Sigmoid colon (tissue), 7 donors: ENCODE measurements at regions of chr5 and their contacts with region 1.

Region 1: GRCh38 chr5:172697123-172698121 is 56.4 kb downstream of the NEURL1B start:
- DNase-seq: peak; percentile 95
- H3K4me3 ChIP-seq: peak overlapping the region; percentile 48 to 68 (median 64)
- H3K27ac ChIP-seq: peak overlapping the region; percentile 74 to 91 (median 85)
- H3K4me1 ChIP-seq: peaks cover 0 to 64% (median 61%) of the 10 kb centered on the region in 4 donors
- H3K27me3 ChIP-seq: no peaks in the 10 kb centered on the region
- CTCF ChIP-seq: peak; percentile 94 to 97 (median 94)
- EP300 ChIP-seq: no peak
- POLR2A ChIP-seq: peak in 1 of 2 donors; percentile 32

Region 2: DNA sequence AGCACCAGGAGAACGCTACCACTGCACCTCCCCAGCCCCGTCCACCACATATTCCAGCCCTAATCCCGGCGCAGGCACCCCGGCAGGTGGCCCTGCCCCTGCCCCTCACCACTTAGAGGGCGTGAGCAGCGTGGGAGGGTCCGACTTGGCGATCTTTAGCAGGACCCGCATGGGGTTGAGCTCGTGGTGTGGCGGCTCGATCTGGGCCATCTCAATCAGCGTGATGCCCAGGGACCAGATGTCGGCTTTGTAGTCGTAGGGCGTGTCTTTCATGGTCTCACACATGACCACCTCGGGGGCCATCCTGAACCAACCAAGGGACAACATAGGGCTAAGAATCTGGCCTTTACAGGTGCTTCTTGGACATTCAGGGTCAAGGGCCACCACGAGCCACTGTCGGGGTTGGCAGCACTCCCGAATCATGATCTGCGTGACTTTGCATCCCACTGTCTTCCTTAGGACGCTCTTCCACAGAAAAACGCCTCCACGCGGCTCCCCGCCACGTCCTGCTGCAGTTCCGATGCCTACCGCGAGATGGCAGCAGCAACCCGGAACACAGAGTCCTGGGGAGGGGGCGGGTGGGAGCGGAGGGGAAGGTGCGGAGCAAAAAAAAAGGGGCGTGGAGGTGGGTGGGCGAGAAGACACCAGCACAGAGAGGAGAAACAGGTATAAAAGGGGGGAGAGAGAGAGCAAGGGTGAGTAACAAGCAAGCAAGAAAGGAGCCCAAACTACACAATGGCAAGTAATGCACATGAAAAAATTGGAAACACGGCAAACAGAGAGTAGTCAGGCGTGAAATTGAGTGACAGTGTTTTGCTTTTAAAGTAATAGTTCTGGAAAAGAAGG is 590.7 kb before region 1 on chr5:
- intact Hi-C with region 1: loop called (anchors 10 kb)
- DNase-seq: peak; percentile 78
- H3K4me3 ChIP-seq: peak overlapping the region; percentile 28 to 43 (median 36)
- H3K27ac ChIP-seq: peak overlapping the region; percentile 24 to 70 (median 57)
- H3K4me1 ChIP-seq: peaks cover 0 to 62% (median 53%) of the 10 kb centered on the region in 4 donors
- H3K27me3 ChIP-seq: no peaks in the 10 kb centered on the region
- CTCF ChIP-seq: peak; percentile 62 to 98 (median 90)
- EP300 ChIP-seq: no peak
- POLR2A ChIP-seq: no peak

Region 3: GRCh38 chr5:172370648-172371545 is 326.5 kb before region 1 on chr5:
- intact Hi-C with region 1: no loop called
- DNase-seq: no peak
- H3K4me3 ChIP-seq: no peak overlapping the region
- H3K27ac ChIP-seq: peak overlapping the region in 1 of 4 donors; percentile 20
- H3K4me1 ChIP-seq: no peaks in the 10 kb centered on the region
- H3K27me3 ChIP-seq: no peaks in the 10 kb centered on the region
- CTCF ChIP-seq: peak in 2 of 4 experiments; percentile 15 to 49
- EP300 ChIP-seq: no peak
- POLR2A ChIP-seq: no peak

Region 4: DNA sequence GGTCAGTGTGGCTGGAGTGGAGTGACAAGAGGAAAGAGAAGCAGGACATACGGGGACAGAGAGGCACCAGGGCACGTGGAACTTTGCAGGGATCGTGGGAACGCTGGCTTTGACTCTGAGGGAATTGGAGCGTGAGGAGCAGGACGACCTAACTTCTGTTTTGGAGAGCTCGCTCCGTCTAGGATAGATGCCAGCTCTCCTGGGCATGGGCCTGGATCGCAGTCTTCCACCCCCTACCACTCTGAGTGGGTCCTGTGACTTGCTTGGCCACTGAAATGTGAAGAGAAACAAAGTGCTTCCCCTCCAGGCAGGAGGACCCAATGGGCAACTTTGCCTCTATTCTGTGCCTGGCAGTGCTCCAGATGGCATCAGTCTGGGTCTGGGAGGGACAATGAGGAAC is 234.4 kb before region 1 on chr5:
- intact Hi-C with region 1: loop called (anchors 5 kb)
- DNase-seq: no peak
- H3K4me3 ChIP-seq: no peak overlapping the region
- H3K27ac ChIP-seq: no peak overlapping the region
- H3K4me1 ChIP-seq: no peaks in the 10 kb centered on the region
- H3K27me3 ChIP-seq: no peaks in the 10 kb centered on the region
- CTCF ChIP-seq: no peak
- EP300 ChIP-seq: no peak
- POLR2A ChIP-seq: no peak

Region 5: DNA sequence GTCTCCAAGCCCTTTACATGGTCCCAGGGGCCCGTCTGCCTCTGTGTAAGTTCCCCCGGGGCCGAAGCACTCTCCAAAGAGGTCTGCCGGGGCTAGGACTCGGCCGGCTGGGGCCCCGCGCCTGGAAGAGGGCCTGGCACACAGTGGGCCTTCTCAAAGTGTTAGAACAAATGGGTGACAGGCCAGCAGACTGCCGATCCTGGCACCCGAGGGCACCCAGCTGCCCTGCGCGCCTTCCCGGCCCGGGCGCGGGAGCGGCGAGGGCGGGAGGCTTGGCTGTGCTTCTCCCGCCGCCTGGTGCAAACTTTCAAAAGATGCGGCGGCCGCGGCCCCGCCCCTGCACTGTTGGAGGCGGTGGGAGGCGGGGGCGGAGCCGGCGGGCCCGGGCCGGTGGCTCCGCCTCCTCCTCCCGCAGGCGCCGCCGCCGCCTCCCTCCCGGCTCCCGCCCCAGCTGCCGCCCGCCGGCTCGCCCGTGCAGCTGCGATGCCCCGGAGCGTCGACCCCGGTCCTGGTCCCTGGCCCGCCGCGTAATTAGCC is 56.5 kb before region 1 on chr5 and contains the start of gene NEURL1B:
- intact Hi-C with region 1: loop called (anchors 2 kb)
- DNase-seq: peak; percentile 93
- H3K4me3 ChIP-seq: peak within 1 kb of the TSS; percentile 79 to 99 (median 99)
- H3K27ac ChIP-seq: peak within 1 kb of the TSS; percentile 94 to 99 (median 96)
- H3K4me1 ChIP-seq: peaks cover 0 to 52% (median 43%) of the 10 kb centered on the region in 4 donors
- H3K27me3 ChIP-seq: no peaks in the 10 kb centered on the region
- CTCF ChIP-seq: no peak
- EP300 ChIP-seq: no peak
- POLR2A ChIP-seq: peak in 1 of 2 donors; percentile 24
- total RNA-seq, gene NEURL1B: 32.9 to 53.2 (median 45.6) TPM

Region 6: DNA sequence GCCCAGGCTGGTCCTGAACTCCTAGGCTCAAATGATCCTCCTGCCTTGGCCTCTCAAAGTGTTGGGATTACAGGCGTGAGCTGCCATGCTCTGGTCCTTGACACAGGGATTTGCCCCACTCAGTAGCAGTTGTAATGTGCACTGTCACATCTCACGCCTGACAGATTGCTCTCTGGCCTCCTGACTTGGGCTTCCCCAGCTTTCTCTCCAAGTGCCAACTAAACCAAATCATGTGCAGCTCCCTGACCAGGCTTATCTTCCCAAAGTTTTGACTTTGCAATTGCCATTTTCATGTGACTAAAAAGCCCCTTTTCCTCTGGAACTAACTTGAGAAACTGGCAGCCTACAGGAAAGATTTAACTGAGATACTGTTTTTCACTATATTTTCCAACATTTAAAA is 272.5 kb after region 1 on chr5:
- intact Hi-C with region 1: no loop called
- DNase-seq: no peak
- H3K4me3 ChIP-seq: no peak overlapping the region
- H3K27ac ChIP-seq: peak overlapping the region in 1 of 4 donors; percentile 26
- H3K4me1 ChIP-seq: no peaks in the 10 kb centered on the region
- H3K27me3 ChIP-seq: no peaks in the 10 kb centered on the region
- CTCF ChIP-seq: no peak
- EP300 ChIP-seq: no peak
- POLR2A ChIP-seq: no peak